AG04450 (cell line): ENCODE measurements at regions of chr1 and their contacts with region 1.

Region 1: GRCh38 chr1:86913896-86914634 is at the start of gene SELENOF:
- DNase-seq: peak; percentile 100
- H3K4me3 ChIP-seq: peak within 1 kb of the TSS; percentile 100
- H3K27ac ChIP-seq: peak within 1 kb of the TSS; percentile 86
- H3K27me3 ChIP-seq: no peaks in the 10 kb centered on the region
- CTCF ChIP-seq: no peak
- polyA plus RNA-seq, gene SELENOF: 248 and 358 TPM in 2 replicates

Region 2: GRCh38 chr1:86779308-86780191 is 134.5 kb before region 1 on chr1:
- CTCF ChIA-PET with region 1: interaction called, 3 read pairs
- POLR2A ChIA-PET with region 1: interaction called, 12 read pairs
- DNase-seq: no peak
- H3K4me3 ChIP-seq: no peak overlapping the region
- H3K27ac ChIP-seq: no peak overlapping the region
- H3K27me3 ChIP-seq: no peaks in the 10 kb centered on the region
- CTCF ChIP-seq: no peak

Region 3: DNA sequence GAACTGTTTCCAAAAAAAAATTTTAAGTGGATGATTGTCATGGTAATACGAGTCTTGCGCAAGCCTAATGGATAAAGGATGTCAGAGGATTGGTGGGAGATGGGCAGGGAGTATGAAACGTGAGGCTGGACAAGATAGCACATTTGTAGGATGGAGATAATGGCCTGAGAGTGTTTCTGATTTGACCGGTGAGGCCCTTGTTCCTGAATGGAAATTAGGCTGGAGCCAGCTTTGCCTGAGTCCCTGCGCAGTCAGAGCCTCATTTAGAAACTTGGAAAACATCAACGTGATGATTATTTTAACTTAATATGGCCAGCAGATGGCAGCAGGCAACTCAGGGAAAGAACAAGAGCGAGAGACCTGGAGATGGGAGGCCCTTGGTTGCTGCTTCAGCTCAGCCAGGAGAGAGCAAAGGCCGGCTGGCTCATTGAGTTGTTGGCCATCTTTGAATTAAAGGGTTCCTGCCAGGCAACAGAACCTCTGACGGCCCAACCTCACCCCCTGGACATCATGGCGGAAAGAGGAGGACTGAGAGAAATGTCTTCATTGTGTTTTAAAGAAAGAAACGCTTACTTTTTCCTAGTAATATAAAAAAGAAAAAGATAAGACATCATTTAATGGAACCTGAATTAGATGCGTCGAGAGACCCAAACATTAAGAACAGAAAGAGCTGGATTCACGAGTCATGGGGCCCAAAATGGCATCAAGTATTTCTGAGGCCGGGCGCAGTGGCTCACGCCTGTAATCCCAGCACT is 80.4 kb before region 1 on chr1:
- CTCF ChIA-PET with region 1: interaction called, 13 read pairs
- POLR2A ChIA-PET with region 1: no interaction called
- DNase-seq: peak; percentile 74
- H3K4me3 ChIP-seq: no peak overlapping the region
- H3K27ac ChIP-seq: no peak overlapping the region
- H3K27me3 ChIP-seq: no peaks in the 10 kb centered on the region
- CTCF ChIP-seq: peak; percentile 60